Heart right ventricle (tissue), 16 donors: ENCODE measurements at regions of chr4 and their contacts with region 1.

Region 1: GRCh38 chr4:71944956-71945355 is 86.8 kb upstream of the NPFFR2 start:
- DNase-seq: no peak
- ATAC-seq: no peak
- H3K4me3 ChIP-seq: no peak overlapping the region
- H3K27ac ChIP-seq: no peak overlapping the region
- H3K4me1 ChIP-seq: no peaks in the 10 kb centered on the region
- H3K27me3 ChIP-seq: no peaks in the 10 kb centered on the region
- CTCF ChIP-seq: no peak

Region 2: DNA sequence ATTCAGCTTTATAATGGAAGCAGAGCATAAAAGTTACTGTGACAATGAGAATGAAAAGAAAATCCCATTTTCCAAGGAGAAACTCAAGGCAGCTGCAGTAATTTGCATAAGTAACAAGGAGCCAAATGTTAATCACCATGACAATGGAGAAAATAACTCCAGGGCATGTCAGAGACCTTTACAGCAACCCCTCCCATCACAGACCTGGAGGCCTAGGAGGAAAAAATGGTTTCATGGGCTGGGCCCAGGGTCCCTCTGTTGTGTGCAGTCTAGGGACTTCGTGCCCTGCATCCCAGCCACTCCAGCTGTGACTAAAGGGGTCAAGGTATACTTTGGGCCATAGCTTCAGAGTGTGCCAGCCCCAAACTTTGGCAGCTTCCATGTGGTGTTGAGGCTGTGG is 310.3 kb after region 1 on chr4:
- intact Hi-C with region 1: no loop called
- DNase-seq: no peak
- ATAC-seq: no peak
- H3K4me3 ChIP-seq: no peak overlapping the region
- H3K27ac ChIP-seq: no peak overlapping the region
- H3K4me1 ChIP-seq: no peaks in the 10 kb centered on the region
- H3K27me3 ChIP-seq: peaks cover 0 to 3% (median 0%) of the 10 kb centered on the region in 7 donors
- CTCF ChIP-seq: no peak

Region 3: DNA sequence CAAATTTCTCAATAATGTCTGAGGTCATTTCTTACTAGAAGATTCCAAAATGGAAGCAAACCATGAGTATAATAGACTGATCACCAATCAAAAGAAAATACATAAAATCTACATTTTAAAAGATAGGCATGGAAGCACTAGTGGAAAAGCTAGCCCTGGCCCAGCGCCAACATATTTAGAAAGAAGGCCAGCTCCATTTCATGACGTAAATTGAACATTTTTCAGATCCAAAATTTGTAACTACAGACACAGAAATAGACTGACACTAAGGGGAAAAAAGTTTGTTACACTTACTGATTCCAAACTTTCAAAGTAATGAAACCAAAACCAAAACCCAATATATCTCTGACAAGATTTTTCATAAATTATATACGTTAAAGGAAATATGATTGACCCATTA is 506.4 kb after region 1 on chr4:
- intact Hi-C with region 1: loop called in 1 of 10 experiments (anchors 5 kb)
- DNase-seq: peak; percentile 13 to 14
- ATAC-seq: no peak
- H3K4me3 ChIP-seq: no peak overlapping the region
- H3K27ac ChIP-seq: no peak overlapping the region
- H3K4me1 ChIP-seq: no peaks in the 10 kb centered on the region
- H3K27me3 ChIP-seq: no peaks in the 10 kb centered on the region
- CTCF ChIP-seq: no peak